ENCODE measurements at regions of chr12 and their contacts with region 1.

Region 1: GRCh38 chr12:28987538-28988324 is 161.3 kb upstream of the FAR2 start:
- DNase-seq: peak in 1 of 2 experiments; percentile 38
- H3K4me3 ChIP-seq: no peak overlapping the region
- H3K27ac ChIP-seq: no peak overlapping the region
- H3K4me1 ChIP-seq: no peaks in the 10 kb centered on the region
- H3K27me3 ChIP-seq: no peaks in the 10 kb centered on the region
- CTCF ChIP-seq: no peak

Region 2: GRCh38 chr12:27785882-27786570 is 1201.7 kb before region 1 on chr12:
- CTCF ChIA-PET with region 1: no interaction called
- POLR2A ChIA-PET with region 1: interaction called, 17 read pairs
- intact Hi-C with region 1: no loop called
- DNase-seq: peak in 1 of 2 experiments; percentile 81
- H3K4me3 ChIP-seq: no peak overlapping the region; the same call in 1 of the 2 replicates
- H3K27ac ChIP-seq: peak overlapping the region; percentile 78
- H3K4me1 ChIP-seq: peaks cover 49% of the 10 kb centered on the region
- H3K27me3 ChIP-seq: no peaks in the 10 kb centered on the region
- CTCF ChIP-seq: no peak

Region 3: DNA sequence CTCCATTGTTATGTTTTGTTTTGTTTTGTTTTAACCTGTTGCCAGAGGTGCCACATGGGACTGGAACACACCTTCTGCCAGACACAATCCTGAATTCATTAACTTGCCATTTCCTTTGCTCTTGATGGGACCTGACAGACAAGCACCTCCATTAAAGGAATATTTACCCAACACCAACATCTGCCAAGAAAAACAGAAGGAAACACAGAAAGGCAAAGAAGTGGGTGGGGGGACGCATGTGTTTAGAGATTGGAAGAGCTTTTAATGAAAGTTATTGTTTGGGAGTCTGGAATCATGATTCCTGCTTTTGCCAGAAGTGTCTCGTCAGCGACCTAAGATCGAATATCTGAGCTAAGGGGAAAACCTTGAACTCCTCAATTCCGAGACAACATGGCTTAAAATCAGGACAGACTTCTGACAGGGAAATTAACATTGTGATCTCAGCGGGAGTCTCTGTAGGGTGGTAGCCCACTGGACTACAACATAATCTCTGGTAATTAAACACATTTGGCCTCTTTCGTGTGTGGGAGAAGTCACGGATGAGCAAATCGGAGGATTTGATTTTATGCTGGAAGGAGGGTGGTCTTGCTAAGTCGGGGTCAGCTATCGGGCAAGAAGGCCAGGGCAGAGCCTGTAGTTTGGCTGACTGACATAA is 49.0 kb before region 1 on chr12:
- CTCF ChIA-PET with region 1: no interaction called
- POLR2A ChIA-PET with region 1: no interaction called
- intact Hi-C with region 1: no loop called
- DNase-seq: no peak
- H3K4me3 ChIP-seq: no peak overlapping the region
- H3K27ac ChIP-seq: no peak overlapping the region
- H3K4me1 ChIP-seq: 0 out of 2 replicates have a peak, but pooled peaks cover 8% of the 10 kb centered on the region
- H3K27me3 ChIP-seq: no peaks in the 10 kb centered on the region
- CTCF ChIP-seq: no peak

Measured in PC-9 (cell line).